CD14-positive monocyte (primary cell): ENCODE measurements at regions of chr10 and their contacts with region 1.

Region 1: GRCh38 chr10:24724381-24725228 is 918 bp upstream of the ARHGAP21 start:
- DNase-seq: peak; percentile 88 to 92 (median 90)
- H3K4me3 ChIP-seq: peak overlapping the region; percentile 50 to 93 (median 80)
- H3K4me3 Mint-ChIP-seq: peak overlapping the region; percentile 96 to 97
- H3K27ac ChIP-seq: peak overlapping the region; percentile 93 to 96
- H3K27ac Mint-ChIP-seq: peak overlapping the region; percentile 92 to 99 (median 98)
- H3K4me1 ChIP-seq: peaks cover 29 to 43% of the 10 kb centered on the region in 2 donors
- H3K4me1 Mint-ChIP-seq: peaks cover 26% of the 10 kb centered on the region
- H3K27me3 ChIP-seq: peaks cover 0 to 10% of the 10 kb centered on the region in 2 donors
- H3K27me3 Mint-ChIP-seq: peaks cover 5 to 10% (median 8%) of the 10 kb centered on the region in 3 donors
- CTCF ChIP-seq: no peak

Region 2: DNA sequence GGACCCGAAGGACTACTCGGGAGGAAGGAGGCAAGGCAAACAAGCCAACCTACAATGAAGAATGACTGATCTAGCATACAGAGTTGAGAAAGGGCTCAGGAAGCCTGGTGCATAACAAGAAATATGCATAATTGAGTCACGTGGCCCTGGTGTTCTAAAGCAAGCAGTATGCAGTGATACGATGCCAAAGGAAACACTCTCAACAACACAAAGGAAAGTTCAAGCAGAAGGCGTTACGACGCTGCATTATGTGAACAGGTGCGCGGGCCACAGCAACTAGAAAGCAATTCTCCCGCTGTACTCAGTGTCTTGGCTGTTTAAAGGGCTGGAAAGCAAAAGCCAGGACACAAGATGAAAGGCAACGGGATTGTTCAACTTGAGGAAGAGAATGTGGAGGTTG is 127.0 kb after region 1 on chr10:
- intact Hi-C with region 1: no loop called
- DNase-seq: no peak
- H3K4me3 ChIP-seq: no peak overlapping the region
- H3K4me3 Mint-ChIP-seq: no peak overlapping the region
- H3K27ac ChIP-seq: no peak overlapping the region
- H3K27ac Mint-ChIP-seq: peak overlapping the region in 1 of 7 donors; percentile 53
- H3K4me1 ChIP-seq: no peaks in the 10 kb centered on the region
- H3K4me1 Mint-ChIP-seq: no peaks in the 10 kb centered on the region
- H3K27me3 ChIP-seq: no peaks in the 10 kb centered on the region
- H3K27me3 Mint-ChIP-seq: peaks cover 0 to 2% (median 0%) of the 10 kb centered on the region in 3 donors
- CTCF ChIP-seq: no peak

Region 3: DNA sequence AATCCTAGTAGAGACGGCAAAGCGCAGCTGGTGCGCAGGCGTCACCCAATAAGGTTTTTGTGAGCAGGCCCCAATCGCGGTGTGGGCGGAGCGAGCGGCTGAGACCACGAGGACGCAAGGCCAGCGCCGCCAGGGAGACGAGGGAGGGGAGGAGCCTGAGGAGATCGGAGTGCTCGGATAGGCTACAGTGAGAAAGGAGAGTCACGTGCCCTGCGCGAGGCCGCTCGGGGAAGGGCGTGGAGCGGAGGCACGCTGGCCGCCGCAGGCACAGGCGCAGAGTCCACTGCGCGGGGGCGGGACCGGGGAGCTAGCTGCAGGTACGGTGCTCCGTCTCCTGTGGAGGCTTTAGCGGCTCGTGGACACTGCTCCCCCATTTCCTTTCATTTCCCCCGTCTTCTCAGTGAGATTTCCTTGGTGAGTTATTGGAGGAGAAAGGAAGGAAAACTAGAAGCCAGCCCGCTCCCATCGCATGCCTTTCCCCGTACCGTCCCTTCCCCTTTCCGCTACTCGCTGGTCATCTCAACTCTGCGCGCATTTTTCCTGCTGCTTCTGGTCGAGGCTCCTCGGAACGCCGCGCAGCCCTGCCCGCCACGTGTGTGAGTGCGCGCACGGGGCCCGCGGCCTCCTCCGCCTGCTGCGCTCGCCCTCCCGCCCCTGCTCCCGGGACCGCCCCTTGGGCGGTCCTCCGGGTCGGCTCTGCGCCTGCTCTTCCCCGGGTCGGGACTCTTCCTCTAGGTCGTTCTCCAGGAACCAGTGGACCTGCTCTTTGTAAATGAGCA is 292.0 kb after region 1 on chr10 and contains the start of gene THNSL1:
- intact Hi-C with region 1: loop called (anchors 5 to 10 kb)
- DNase-seq: peak; percentile 94 to 96 (median 95)
- H3K4me3 ChIP-seq: peak within 1 kb of the TSS; percentile 59 to 80 (median 64)
- H3K4me3 Mint-ChIP-seq: peak within 1 kb of the TSS; percentile 85 to 91
- H3K27ac ChIP-seq: peak within 1 kb of the TSS; percentile 65 to 75
- H3K27ac Mint-ChIP-seq: peak within 1 kb of the TSS; percentile 89 to 97 (median 93)
- H3K4me1 ChIP-seq: peaks cover 19 to 22% of the 10 kb centered on the region in 2 donors
- H3K4me1 Mint-ChIP-seq: peaks cover 22% of the 10 kb centered on the region
- H3K27me3 ChIP-seq: no peaks in the 10 kb centered on the region
- H3K27me3 Mint-ChIP-seq: peaks cover 0 to 5% (median 0%) of the 10 kb centered on the region in 3 donors
- CTCF ChIP-seq: no peak
- polyA plus RNA-seq, gene THNSL1: 0.03 to 0.13 TPM in 2 of 3 donors, not detected in the other